Mammary epithelial cell (primary cell): ENCODE measurements at regions of chr4 and their contacts with region 1.

Region 1: GRCh38 chr4:26257850-26258249 is 63.0 kb upstream of the RBPJ start:
- DNase-seq: no peak
- H3K4me3 ChIP-seq: no peak overlapping the region
- H3K27ac ChIP-seq: no peak overlapping the region
- H3K4me1 ChIP-seq: no peaks in the 10 kb centered on the region
- H3K27me3 ChIP-seq: peaks cover 7% of the 10 kb centered on the region
- CTCF ChIP-seq: no peak

Region 2: DNA sequence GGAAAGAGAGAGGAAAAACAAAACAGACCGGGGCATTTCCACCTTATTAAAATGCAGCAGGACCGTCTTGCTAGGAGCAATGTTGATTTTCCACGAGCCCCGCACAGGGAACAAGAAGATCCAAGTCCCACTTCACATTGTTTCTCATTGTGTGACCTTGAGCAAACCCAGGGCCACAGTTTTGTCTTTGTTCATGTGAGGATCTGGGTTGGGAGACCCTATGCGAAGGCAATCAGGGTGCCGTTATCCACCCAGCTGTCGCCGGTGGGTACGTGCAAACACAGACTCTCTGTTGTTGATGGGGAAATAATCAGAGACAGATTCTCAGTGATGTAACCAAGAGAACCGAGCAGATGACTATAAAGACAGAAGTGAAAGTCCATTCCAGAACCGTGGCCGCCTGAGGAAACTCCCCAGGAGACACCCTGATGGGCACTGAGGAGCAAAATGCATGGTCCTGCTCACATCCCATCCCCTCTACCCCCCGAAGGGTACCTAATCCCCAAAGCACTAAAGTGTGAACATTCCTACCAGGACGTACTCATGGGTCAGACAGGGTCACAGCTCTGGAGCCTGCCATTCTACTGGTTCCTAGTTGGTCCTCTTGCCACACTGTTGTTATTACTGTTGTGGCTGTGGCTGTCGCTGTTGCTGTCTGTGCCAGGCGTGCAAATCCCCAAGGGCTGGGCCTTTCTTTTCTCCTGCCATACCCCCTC is 39.7 kb before region 1 on chr4:
- CTCF ChIA-PET with region 1: no interaction called
- dilution Hi-C with region 1: loop called (anchors 5 kb)
- in situ Hi-C with region 1: no loop called
- intact Hi-C with region 1: no loop called
- DNase-seq: no peak
- H3K4me3 ChIP-seq: no peak overlapping the region
- H3K27ac ChIP-seq: no peak overlapping the region
- H3K4me1 ChIP-seq: no peaks in the 10 kb centered on the region
- H3K27me3 ChIP-seq: peaks cover 7% of the 10 kb centered on the region
- CTCF ChIP-seq: no peak